CD4-positive, alpha-beta memory T cell (primary cell): ENCODE measurements at regions of chr2 and their contacts with region 1.

Region 1: DNA sequence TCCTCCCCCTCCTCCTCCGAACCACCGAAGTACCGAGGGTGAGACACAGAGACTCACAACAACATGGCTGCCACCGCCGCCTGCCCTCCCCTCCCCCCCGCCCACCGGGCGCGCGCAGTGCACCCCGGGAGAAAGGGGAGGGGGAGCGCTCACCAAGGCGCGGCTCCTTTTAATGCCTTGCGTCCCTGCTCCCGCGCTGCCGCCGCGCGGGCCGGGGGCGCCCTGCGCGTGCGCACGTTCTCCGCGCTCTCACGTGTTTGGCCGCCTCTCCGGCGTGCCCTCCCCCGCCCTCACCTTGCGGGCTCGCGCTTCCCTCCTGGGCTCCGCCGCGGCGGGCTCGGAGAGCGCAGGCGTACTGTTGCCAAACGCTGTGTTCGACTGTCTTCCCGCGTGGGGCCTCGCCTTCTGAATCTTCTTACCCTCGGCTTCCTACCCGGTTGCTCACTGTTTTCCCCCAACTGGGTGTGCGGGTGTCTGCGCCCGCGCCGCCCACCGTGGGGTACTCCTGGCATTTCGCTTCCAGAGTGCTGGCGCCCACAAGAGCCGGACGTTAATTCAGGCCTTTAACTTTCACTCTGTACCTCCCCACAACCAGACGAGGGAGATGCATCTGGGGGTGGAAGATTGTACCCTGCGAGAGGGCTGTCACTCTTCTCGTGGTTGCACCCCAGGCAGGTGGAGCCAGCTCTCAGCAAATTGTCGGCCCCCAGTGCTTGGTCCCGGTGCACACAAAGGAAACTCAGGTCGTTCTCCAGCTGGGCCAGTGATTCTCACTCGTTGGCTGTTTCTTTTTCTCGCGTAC is at the start of gene PUM2:
- DNase-seq: peak; percentile 95 to 98 (median 97)
- H3K4me3 ChIP-seq: peak within 1 kb of the TSS; percentile 80 to 83
- H3K4me3 Mint-ChIP-seq: peak within 1 kb of the TSS in 7 of 8 donors; percentile 81 to 97 (median 94)
- H3K27ac ChIP-seq: peak within 1 kb of the TSS; percentile 85
- H3K27ac Mint-ChIP-seq: peak within 1 kb of the TSS in 6 of 7 donors; percentile 64 to 93 (median 88)
- H3K4me1 ChIP-seq: peaks cover 64% of the 10 kb centered on the region
- H3K4me1 Mint-ChIP-seq: peaks cover 27 to 40% (median 37%) of the 10 kb centered on the region in 4 donors
- H3K27me3 ChIP-seq: no peaks in the 10 kb centered on the region
- H3K27me3 Mint-ChIP-seq: no peaks in the 10 kb centered on the region
- total RNA-seq, gene PUM2: 161 to 184 TPM

Region 2: GRCh38 chr2:19347619-19348562 is 1003.1 kb before region 1 on chr2:
- CTCF ChIA-PET with region 1: no interaction called
- POLR2A ChIA-PET with region 1: no interaction called
- intact Hi-C with region 1: loop called (anchors 5 kb)
- DNase-seq: peak; percentile 97 to 100 (median 98)
- H3K4me3 ChIP-seq: peak overlapping the region; percentile 72 to 83
- H3K4me3 Mint-ChIP-seq: peak overlapping the region; percentile 96 to 99 (median 98)
- H3K27ac ChIP-seq: peak overlapping the region; percentile 92
- H3K27ac Mint-ChIP-seq: peak overlapping the region; percentile 97 to 100 (median 98)
- H3K4me1 ChIP-seq: peaks cover 38% of the 10 kb centered on the region
- H3K4me1 Mint-ChIP-seq: peaks cover 13 to 45% (median 29%) of the 10 kb centered on the region in 4 donors
- H3K27me3 ChIP-seq: peaks cover 23% of the 10 kb centered on the region
- H3K27me3 Mint-ChIP-seq: peaks cover 24 to 35% of the 10 kb centered on the region in 2 donors

Region 3: DNA sequence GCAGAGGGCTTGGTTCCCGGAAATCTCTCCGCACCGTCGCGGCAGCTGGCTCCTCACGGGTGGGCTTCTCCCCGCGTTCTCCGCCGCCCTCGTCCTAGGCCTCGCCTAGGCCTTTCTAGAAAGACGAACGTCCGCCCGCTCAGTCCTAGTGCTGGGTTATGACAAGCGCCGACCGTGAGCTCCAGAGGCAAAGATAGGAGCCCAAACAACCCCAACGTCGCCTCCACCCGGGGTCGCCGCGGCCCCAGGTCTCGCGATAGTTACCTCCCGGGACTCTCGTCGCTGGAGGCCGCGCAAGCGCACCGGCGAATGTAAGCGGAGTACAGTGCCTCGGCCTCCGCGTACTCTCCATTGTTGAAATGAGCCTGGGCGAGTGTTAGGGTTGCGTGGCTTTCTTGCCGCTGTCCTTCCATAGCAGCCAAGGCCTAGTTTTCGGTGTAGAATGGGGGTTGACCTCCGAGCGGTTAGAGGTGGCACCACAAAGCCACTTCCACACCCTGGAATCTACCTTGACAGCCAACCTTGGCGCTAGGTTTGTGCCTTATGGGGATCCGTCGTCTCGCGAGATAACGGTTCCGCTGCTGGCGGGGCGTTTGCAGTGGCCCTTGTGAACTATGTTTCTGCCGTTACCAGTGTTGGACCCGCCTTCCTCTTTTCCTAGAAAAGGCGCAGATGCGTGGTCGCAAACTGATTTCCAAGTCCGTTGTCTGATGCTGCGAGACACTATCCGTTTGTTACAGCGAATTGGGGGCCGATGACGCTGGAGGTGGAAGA is 449.3 kb before region 1 on chr2 and contains the start of gene TTC32:
- CTCF ChIA-PET with region 1: no interaction called
- POLR2A ChIA-PET with region 1: no interaction called
- intact Hi-C with region 1: loop called (anchors 1 kb)
- DNase-seq: peak; percentile 95 to 98 (median 97)
- H3K4me3 ChIP-seq: peak within 1 kb of the TSS; percentile 59 to 63
- H3K4me3 Mint-ChIP-seq: peak within 1 kb of the TSS; percentile 92 to 99 (median 96)
- H3K27ac ChIP-seq: peak within 1 kb of the TSS; percentile 92
- H3K27ac Mint-ChIP-seq: peak within 1 kb of the TSS; percentile 87 to 100 (median 98)
- H3K4me1 ChIP-seq: peaks cover 37% of the 10 kb centered on the region
- H3K4me1 Mint-ChIP-seq: peaks cover 18 to 45% (median 29%) of the 10 kb centered on the region in 4 donors
- H3K27me3 ChIP-seq: no peaks in the 10 kb centered on the region
- H3K27me3 Mint-ChIP-seq: no peaks in the 10 kb centered on the region
- total RNA-seq, gene TTC32: 44.4 to 48.7 TPM

Region 4: DNA sequence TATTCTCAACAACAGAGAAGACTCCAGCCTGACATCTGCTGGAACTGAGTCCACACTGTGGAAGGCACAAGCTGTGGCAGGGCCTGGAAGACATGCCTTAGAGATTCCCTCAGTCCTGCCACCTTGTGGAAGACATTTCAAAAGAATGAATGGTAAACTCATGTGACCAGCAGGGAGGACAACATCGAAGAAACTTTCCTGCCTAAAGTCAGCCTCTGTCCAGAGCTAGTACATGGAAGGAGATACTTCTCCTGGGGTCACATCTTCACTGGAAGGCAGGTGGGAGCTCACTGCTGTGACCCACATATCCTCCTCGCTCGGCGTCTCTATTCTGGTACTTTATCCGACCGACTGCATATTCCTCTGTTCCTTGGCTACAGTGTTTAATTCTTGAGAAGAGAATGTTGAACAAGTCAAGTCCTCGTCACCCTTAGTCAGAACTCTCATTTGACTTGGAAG is 59.8 kb before region 1 on chr2:
- CTCF ChIA-PET with region 1: no interaction called
- POLR2A ChIA-PET with region 1: no interaction called
- intact Hi-C with region 1: loop called (anchors 5 kb)
- DNase-seq: peak in 3 of 5 donors; percentile 2 to 17 (median 9)
- H3K4me3 ChIP-seq: no peak overlapping the region
- H3K4me3 Mint-ChIP-seq: no peak overlapping the region
- H3K27ac ChIP-seq: no peak overlapping the region
- H3K27ac Mint-ChIP-seq: peak overlapping the region in 2 of 7 donors; percentile 56 to 63
- H3K4me1 ChIP-seq: no peaks in the 10 kb centered on the region
- H3K4me1 Mint-ChIP-seq: peaks cover 5 to 11% (median 9%) of the 10 kb centered on the region in 4 donors
- H3K27me3 ChIP-seq: no peaks in the 10 kb centered on the region
- H3K27me3 Mint-ChIP-seq: no peaks in the 10 kb centered on the region

Region 5: GRCh38 chr2:20326163-20326780 is 24.7 kb before region 1 on chr2:
- CTCF ChIA-PET with region 1: interaction called, 41 read pairs
- POLR2A ChIA-PET with region 1: interaction called, 14 read pairs
- intact Hi-C with region 1: loop called (anchors 1 kb)
- DNase-seq: peak; percentile 34 to 55 (median 41)
- H3K4me3 ChIP-seq: no peak overlapping the region
- H3K4me3 Mint-ChIP-seq: peak overlapping the region in 2 of 8 donors; percentile 31 to 51
- H3K27ac ChIP-seq: no peak overlapping the region
- H3K27ac Mint-ChIP-seq: peak overlapping the region; percentile 45 to 75 (median 52)
- H3K4me1 ChIP-seq: peaks cover 52% of the 10 kb centered on the region
- H3K4me1 Mint-ChIP-seq: peaks cover 42 to 76% (median 65%) of the 10 kb centered on the region in 4 donors
- H3K27me3 ChIP-seq: no peaks in the 10 kb centered on the region
- H3K27me3 Mint-ChIP-seq: no peaks in the 10 kb centered on the region

Region 6: GRCh38 chr2:20411361-20411894 is 60.5 kb after region 1 on chr2:
- CTCF ChIA-PET with region 1: interaction called, 3 read pairs
- POLR2A ChIA-PET with region 1: interaction called, 5 read pairs
- intact Hi-C with region 1: loop called (anchors 2 kb)
- DNase-seq: peak; percentile 55 to 63 (median 59)
- H3K4me3 ChIP-seq: no peak overlapping the region
- H3K4me3 Mint-ChIP-seq: no peak overlapping the region
- H3K27ac ChIP-seq: no peak overlapping the region
- H3K27ac Mint-ChIP-seq: peak overlapping the region in 2 of 7 donors; percentile 13 to 71
- H3K4me1 ChIP-seq: no peaks in the 10 kb centered on the region
- H3K4me1 Mint-ChIP-seq: peaks cover 0 to 2% (median under 1%) of the 10 kb centered on the region in 4 donors
- H3K27me3 ChIP-seq: no peaks in the 10 kb centered on the region
- H3K27me3 Mint-ChIP-seq: peaks cover 3 to 12% of the 10 kb centered on the region in 2 donors

Region 7: DNA sequence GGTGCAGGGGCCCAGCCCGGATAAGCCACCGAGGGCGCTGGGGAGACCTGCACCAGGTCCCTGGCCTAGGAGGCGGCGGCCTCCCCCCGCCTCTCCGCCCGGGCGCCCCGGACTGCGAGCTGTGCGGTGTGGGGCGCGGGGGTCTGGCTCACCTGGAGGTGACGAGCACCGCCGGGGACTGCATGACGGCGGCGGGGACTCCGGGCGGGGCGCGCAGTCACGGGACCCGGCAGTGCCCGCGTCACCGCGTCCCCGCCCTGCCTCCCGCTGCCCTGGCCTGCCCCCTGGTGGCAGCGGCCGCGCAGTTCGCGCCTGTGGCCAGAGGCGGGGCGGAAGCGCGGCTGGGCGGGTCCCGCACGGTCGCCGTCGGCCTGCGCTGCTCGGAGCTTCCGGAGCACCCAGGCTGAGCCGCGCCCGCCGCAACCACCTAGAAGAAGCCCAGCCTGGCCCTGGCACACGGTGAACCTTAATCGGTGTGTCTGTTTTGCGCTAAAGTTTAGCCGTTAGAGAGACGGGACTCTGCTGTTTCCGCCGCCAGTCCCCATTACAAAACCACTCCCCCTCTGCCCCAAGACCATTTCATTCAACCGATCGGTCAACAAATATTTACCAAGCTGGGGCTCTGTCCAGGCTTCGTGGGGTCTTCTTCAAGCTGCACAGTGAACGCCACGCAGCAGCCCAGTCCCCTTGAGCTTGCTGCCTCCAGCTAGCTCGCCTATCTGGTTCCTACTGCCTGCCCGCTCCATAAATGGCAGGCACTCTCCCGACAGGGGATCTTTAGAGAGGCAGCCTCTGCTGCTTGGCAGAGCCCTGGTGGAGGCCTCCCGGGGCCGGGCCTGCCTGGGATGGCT is 300.2 kb after region 1 on chr2 and contains the start of gene HS1BP3:
- CTCF ChIA-PET with region 1: interaction called, 4 read pairs
- POLR2A ChIA-PET with region 1: interaction called, 19 read pairs
- intact Hi-C with region 1: loop called (anchors 2 kb)
- DNase-seq: peak; percentile 88 to 98 (median 94)
- H3K4me3 ChIP-seq: peak within 1 kb of the TSS; percentile 50 to 87
- H3K4me3 Mint-ChIP-seq: peak within 1 kb of the TSS; percentile 87 to 93 (median 90)
- H3K27ac ChIP-seq: peak within 1 kb of the TSS; percentile 89
- H3K27ac Mint-ChIP-seq: peak within 1 kb of the TSS; percentile 92 to 98 (median 97)
- H3K4me1 ChIP-seq: peaks cover 20% of the 10 kb centered on the region
- H3K4me1 Mint-ChIP-seq: peaks cover 22 to 42% (median 36%) of the 10 kb centered on the region in 4 donors
- H3K27me3 ChIP-seq: no peaks in the 10 kb centered on the region
- H3K27me3 Mint-ChIP-seq: no peaks in the 10 kb centered on the region
- total RNA-seq, gene HS1BP3: 20.1 TPM